ENCODE measurements at regions of chr5 and their contacts with region 1.

Region 1: DNA sequence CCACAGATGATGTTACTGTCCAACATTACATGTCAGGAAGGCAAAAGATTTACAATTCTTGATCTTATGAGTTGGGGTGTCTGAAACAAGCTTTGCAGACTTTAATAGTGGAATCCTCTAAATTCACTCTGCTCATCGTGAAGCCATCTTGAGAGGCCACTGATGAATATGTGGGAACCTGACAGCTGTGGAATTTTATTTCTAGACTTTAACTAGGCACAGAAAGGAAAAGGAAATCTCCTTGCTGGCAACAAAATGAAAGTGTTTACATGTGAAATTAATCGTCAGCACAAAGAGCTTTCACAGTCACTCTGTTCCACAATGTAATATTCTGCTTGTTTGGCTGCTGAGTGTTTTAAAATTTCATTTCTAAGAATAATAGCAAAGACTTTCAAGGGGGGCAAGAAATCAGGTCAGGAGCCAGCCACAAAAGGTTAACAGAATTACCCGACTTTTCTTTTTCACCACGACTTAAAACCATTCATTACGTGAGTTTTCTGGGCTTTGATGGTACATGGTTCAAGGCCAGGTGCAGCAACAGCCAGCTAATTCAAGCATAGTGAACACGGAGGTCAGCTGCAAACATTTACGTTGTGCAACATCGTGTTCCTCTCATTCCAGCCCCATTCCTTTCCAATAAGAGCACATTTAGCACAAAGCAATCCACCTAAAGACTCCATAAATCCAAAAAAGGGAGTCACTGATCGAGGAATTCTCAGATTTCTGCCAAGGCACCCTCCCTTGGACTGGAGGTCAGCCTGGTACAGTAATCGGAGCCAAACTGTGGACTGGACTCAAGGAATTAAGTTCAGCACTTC is 14.6 kb downstream of the NREP start:
- DNase-seq: no peak
- H3K4me3 ChIP-seq: no peak overlapping the region
- H3K27ac ChIP-seq: no peak overlapping the region
- H3K4me1 ChIP-seq: peaks cover 22% of the 10 kb centered on the region
- H3K27me3 ChIP-seq: no peaks in the 10 kb centered on the region
- CTCF ChIP-seq: no peak

Region 2: GRCh38 chr5:111530298-111530740 is 212.1 kb before region 1 on chr5:
- CTCF ChIA-PET with region 1: interaction called, 17 read pairs
- dilution Hi-C with region 1: no loop called
- in situ Hi-C with region 1: no loop called
- intact Hi-C with region 1: no loop called
- DNase-seq: peak; percentile 40
- H3K4me3 ChIP-seq: no peak overlapping the region
- H3K27ac ChIP-seq: no peak overlapping the region
- H3K4me1 ChIP-seq: peaks cover 8% of the 10 kb centered on the region
- H3K27me3 ChIP-seq: no peaks in the 10 kb centered on the region
- CTCF ChIP-seq: no peak

Region 3: DNA sequence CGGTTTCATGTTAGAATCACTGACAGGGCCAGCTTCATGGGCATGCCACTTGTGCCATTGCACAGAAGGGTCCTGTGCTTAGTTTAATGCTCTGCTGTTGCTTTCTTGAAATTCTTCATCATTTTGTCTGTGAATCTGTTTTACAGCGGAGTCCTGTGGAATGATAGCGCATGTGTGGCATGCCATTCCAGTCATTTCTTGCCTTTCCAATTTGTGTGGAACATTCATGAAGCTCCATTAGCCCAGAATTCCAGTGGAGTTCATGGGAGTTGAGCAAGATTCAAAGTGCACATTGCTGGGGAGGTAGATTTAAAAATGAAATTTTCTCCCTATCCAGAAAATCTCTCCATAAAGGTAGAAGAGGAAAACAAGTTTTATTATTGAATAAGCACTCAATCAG is 58.0 kb after region 1 on chr5:
- CTCF ChIA-PET with region 1: no interaction called
- dilution Hi-C with region 1: no loop called
- in situ Hi-C with region 1: no loop called
- intact Hi-C with region 1: no loop called
- DNase-seq: no peak
- H3K4me3 ChIP-seq: no peak overlapping the region
- H3K27ac ChIP-seq: no peak overlapping the region
- H3K4me1 ChIP-seq: no peaks in the 10 kb centered on the region
- H3K27me3 ChIP-seq: peaks cover 8% of the 10 kb centered on the region
- CTCF ChIP-seq: no peak

Measured in mammary epithelial cell (primary cell).